Adrenal gland (tissue), 19 donors: ENCODE measurements at regions of chr4 and their contacts with region 1.

Region 1: DNA sequence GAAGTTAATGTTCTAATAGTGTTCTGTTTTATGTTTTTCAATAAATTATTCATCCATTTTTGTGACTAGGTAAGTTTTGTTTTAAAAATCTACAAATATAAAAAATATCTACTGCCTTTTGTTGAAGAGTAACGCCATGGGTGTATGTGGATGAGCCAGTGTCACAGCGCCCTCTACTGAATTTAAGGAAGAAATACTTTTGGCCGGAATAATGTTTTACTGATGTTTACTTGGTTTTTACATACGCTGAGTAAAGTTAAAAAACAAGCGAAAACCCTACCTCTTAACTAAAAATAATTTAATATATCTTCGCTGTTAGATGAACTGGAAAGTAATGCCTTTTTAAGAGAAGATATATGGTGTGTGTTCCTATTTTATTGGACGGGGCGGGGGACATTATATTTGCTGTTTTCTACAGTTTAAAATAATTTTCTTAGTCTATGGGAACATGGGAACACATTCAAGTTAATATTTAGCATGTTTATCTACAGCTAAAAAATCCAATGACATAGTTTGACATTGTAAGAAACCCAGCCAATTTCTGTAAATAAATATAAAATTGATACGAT is 86.1 kb downstream of the CPE start:
- DNase-seq: peak in 4 of 7 donors; percentile 20 to 63 (median 35)
- H3K4me3 ChIP-seq: no peak overlapping the region
- H3K27ac ChIP-seq: no peak overlapping the region
- H3K4me1 ChIP-seq: no peaks in the 10 kb centered on the region
- H3K27me3 ChIP-seq: no peaks in the 10 kb centered on the region
- CTCF ChIP-seq: peak; percentile 71 to 91 (median 84)
- POLR2A ChIP-seq: no peak

Region 2: GRCh38 chr4:165131247-165131832 is 333.6 kb before region 1 on chr4:
- intact Hi-C with region 1: loop called (anchors 5 kb)
- DNase-seq: peak; percentile 31 to 88 (median 70)
- H3K4me3 ChIP-seq: no peak overlapping the region
- H3K27ac ChIP-seq: no peak overlapping the region
- H3K4me1 ChIP-seq: peaks cover 0 to 5% of the 10 kb centered on the region in 2 donors
- H3K27me3 ChIP-seq: no peaks in the 10 kb centered on the region
- CTCF ChIP-seq: peak; percentile 86 to 98 (median 94)
- POLR2A ChIP-seq: no peak

Region 3: DNA sequence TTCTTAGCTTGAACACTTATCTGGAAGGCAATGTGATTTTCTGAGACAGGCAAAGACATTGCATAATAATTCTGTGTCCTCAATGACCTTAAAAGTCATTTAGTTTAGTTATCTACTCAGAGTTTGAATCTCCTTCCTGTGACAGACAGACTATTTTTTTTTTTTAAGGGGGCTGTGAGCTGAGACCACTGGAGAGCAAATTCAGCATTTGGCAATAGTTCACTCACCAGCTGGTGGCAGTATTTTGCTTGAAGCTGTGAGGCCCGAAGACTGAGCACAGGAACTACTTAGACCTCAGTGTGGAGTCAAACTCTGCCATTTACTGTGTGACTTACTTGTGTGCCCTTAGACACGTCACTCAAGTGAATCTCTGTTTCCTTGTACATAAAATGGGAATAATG is 109.0 kb before region 1 on chr4:
- intact Hi-C with region 1: loop called (anchors 10 kb)
- DNase-seq: peak in 4 of 7 donors; percentile 21 to 57 (median 50)
- H3K4me3 ChIP-seq: no peak overlapping the region
- H3K27ac ChIP-seq: no peak overlapping the region
- H3K4me1 ChIP-seq: no peaks in the 10 kb centered on the region
- H3K27me3 ChIP-seq: no peaks in the 10 kb centered on the region
- CTCF ChIP-seq: peak; percentile 18 to 50 (median 37)
- POLR2A ChIP-seq: no peak